Posterior vena cava (tissue), 2 donors: ENCODE measurements at regions of chr16 and their contacts with region 1.

Region 1: GRCh38 chr16:23803591-23804123 is 32.1 kb upstream of the PRKCB start:
- DNase-seq: peak; percentile 86

Region 2: GRCh38 chr16:24036614-24037013 is 233.0 kb after region 1 on chr16:
- intact Hi-C with region 1: loop called in 1 of 2 experiments (anchors 5 kb)
- DNase-seq: no peak